AG04450 (cell line): ENCODE measurements at regions of chr6 and their contacts with region 1.

Region 1: DNA sequence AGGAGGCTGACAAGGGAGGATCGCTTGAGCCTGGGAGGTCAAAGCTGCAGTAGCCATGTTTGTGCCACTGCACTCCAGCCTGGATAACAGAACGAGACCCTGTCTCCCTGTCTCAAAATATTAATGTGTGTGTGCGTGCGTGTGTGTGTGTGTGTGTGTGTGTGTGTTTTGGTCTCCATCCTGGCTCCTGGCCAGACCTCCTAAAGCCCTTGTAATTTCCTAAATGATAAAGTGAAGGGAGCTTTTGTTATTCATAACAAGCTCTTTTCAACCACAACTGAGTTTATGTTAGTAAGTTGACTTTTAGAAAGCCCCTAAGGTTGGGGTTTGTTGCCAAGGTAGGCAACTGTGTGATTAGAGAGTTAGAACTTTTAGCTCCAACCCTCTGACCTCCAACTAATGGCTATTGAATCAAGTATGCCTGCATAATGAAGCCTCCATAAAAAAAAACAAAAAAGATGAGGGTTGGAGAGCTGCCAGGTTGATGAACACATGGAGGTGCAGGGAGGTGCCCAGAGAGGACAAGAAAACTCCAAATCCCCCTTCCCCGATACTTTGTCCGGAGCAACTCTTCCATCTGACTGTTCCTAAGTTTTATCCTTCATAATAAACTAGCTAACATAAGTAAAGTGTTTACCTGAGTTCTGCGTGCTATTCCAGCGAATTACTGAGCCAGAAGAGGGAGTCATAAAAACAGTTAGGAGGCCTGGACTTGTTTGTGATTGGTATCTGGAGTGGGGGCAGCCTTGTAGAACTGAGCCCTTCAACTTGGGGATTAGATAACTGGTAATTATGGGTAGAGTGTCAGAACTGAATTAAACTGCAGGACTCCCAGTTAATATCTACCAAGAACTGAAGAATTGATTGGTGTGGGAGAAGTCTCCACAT is 5.3 kb upstream of the AIF1 start:
- DNase-seq: no peak
- H3K4me3 ChIP-seq: no peak overlapping the region
- H3K27ac ChIP-seq: no peak overlapping the region
- H3K27me3 ChIP-seq: peaks cover 6% of the 10 kb centered on the region
- CTCF ChIP-seq: no peak

Region 2: DNA sequence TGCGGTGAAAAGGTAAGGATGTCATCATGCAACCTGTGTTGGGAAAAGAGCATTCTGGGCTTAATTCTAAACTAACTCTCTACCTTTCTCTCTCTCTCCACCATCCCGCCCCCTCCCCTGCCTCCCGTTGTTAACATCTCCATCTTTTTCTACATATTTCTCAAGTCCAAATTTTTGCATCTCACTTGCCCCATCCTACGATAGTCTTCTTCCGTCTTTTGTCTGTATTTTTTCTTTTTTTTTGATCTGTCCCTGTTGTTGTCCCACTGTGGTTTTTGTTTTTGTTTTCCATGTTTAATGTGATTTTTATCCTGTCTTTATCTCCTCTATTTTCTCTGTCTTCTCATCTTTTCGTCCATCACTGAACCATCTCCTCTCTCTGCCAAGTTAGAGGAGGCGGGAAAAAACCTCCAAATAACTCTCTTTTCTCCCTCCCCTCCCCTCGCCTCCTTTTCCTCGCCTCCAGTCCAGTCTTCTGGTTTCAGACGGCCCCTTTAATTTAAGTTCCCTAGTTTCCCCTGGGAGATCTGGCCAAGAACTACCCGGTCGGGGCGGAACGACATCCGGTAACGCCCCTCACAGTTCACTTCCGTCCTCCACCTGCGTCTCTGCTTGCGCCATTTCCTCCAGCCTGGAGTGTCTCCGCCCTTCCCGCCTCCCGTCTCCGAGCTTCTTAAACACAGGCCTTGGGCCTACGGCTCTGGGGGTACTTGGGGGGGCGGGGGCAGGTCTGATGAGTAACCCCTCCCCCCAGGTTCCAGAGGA is 62.6 kb before region 1 on chr6 and contains the start of gene NFKBIL1:
- CTCF ChIA-PET with region 1: interaction called, 11 read pairs
- POLR2A ChIA-PET with region 1: no interaction called
- DNase-seq: peak; percentile 94
- H3K4me3 ChIP-seq: peak within 1 kb of the TSS; percentile 75
- H3K27ac ChIP-seq: peak within 1 kb of the TSS; percentile 52
- H3K27me3 ChIP-seq: no peaks in the 10 kb centered on the region
- CTCF ChIP-seq: no peak
- polyA plus RNA-seq, gene NFKBIL1: 5.1 and 5.4 TPM in 2 replicates